Astrocyte of the cerebellum (primary cell): ENCODE measurements at regions of chr11 and their contacts with region 1.

Region 1: DNA sequence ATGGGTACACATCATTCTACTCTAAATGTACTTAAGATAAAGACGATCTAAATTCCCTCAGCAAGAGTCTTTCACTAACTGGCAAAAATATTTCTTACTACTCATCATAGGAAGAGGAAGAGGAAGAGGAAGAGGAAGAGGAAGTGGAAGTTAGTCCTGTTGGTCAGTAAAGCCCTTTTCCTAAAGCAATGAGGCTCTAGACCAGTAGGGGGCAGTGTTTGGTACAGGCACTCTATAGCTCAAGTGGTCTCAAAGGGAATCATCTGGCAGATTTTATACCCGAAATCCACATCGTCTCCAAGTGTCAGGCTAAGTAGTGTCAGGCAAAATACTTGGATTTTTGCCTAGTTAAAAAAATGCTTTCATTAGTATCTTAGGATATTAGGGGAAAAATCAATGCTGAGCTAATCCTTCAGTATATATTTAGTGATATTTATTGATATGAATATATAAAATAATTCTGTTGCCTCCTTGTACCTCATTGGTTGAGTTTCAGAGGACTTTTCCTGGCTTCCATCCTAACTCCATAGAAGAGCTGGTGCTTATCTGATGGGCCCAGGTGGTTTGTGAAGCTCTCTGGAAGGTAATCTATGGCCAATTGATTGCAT is 7.7 kb downstream of the BLID start:
- DNase-seq: no peak
- H3K4me3 ChIP-seq: no peak overlapping the region
- CTCF ChIP-seq: peak; percentile 71

Region 2: DNA sequence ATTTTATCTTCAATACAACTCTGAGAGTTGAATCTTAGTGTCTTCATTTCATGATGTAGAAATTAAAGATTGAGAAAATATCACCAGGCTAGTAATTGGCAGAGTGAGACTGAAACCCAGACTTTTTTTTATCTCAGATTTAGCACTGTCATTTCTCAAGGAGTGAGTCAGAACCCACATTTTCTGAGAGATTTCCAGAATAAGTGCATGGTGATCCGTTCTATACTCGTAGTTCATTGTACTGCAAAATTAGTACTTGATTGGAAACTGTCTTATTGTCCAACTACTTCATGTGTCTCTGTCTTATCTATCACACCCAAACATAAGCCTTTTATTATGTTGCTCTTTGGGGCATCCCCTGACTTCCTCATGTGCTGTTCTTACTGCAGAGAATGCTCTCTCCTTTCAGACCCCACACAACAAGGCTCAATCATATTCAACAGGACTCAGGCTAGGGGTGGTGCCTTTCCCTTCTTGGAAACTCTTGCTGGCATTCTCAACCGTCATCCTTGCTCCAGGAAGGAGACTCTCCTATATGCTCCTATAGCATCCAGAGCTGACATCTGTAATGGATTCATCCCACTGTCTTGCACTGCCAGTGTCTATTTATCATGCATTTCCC is 84.4 kb after region 1 on chr11:
- in situ Hi-C with region 1: loop called (anchors 5 kb)
- DNase-seq: no peak
- H3K4me3 ChIP-seq: no peak overlapping the region
- CTCF ChIP-seq: no peak